ENCODE measurements at regions of chr12 and their contacts with region 1.

Region 1: DNA sequence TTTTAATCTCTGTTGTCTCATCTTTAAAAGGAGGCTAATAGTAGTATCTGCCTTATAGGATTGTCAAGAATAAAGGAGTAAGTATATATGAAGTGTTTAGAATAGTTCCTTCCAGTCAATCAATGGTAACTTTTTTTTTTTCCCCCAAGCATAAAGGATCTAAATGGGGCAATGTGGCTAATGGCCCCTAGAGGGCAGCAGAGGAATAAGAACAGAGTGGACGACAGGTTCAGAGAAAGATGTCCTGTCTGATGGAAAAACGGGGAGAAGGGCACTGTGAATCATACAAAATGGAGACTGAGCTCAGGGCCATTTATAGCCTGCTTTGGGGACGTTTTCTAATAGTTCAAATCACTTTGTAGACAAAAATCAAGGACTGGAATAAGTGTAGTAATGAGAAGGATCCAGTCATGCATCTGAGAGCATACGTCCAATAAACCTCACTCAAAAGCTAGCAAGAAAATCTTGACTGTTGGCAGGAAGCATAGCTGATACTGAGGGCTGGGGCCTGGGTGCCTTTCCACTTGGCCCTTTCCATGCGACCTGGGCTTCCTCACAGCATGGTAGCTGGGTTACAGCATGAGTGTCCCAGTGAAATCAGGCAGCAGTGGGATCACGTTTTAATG is 51.3 kb downstream of the IFNG-AS1 start:
- DNase-seq: peak; percentile 86
- ATAC-seq: peak; percentile 57
- H3K4me3 Mint-ChIP-seq: no peak overlapping the region
- H3K27ac Mint-ChIP-seq: peak overlapping the region; percentile 86
- H3K4me1 Mint-ChIP-seq: peaks cover 56% of the 10 kb centered on the region
- H3K27me3 Mint-ChIP-seq: no peaks in the 10 kb centered on the region
- CTCF ChIP-seq: peak; percentile 93

Region 2: GRCh38 chr12:68012712-68013111 is 27.9 kb before region 1 on chr12:
- CTCF ChIA-PET with region 1: interaction called, 29 read pairs
- POLR2A ChIA-PET with region 1: interaction called, 3 read pairs
- intact Hi-C with region 1: no loop called
- DNase-seq: no peak
- ATAC-seq: no peak
- H3K4me3 Mint-ChIP-seq: no peak overlapping the region
- H3K27ac Mint-ChIP-seq: no peak overlapping the region
- H3K4me1 Mint-ChIP-seq: peaks cover 19% of the 10 kb centered on the region
- H3K27me3 Mint-ChIP-seq: no peaks in the 10 kb centered on the region
- CTCF ChIP-seq: no peak

Region 3: GRCh38 chr12:68113644-68114043 is 73.1 kb after region 1 on chr12:
- CTCF ChIA-PET with region 1: interaction called, 14 read pairs
- POLR2A ChIA-PET with region 1: no interaction called
- intact Hi-C with region 1: no loop called
- DNase-seq: peak; percentile 74
- ATAC-seq: peak; percentile 54
- H3K4me3 Mint-ChIP-seq: no peak overlapping the region
- H3K27ac Mint-ChIP-seq: no peak overlapping the region
- H3K4me1 Mint-ChIP-seq: peaks cover 25% of the 10 kb centered on the region
- H3K27me3 Mint-ChIP-seq: peaks cover 2% of the 10 kb centered on the region
- CTCF ChIP-seq: peak; percentile 62

Region 4: GRCh38 chr12:68158432-68158831 is 117.9 kb after region 1 on chr12:
- CTCF ChIA-PET with region 1: interaction called, 107 read pairs
- POLR2A ChIA-PET with region 1: interaction called, 11 read pairs
- intact Hi-C with region 1: loop called (anchors 5 kb)
- DNase-seq: peak; percentile 57
- ATAC-seq: peak; percentile 43
- H3K4me3 Mint-ChIP-seq: peak overlapping the region; percentile 82
- H3K27ac Mint-ChIP-seq: peak overlapping the region; percentile 83
- H3K4me1 Mint-ChIP-seq: peaks cover 57% of the 10 kb centered on the region
- H3K27me3 Mint-ChIP-seq: no peaks in the 10 kb centered on the region
- CTCF ChIP-seq: peak; percentile 81

Region 5: DNA sequence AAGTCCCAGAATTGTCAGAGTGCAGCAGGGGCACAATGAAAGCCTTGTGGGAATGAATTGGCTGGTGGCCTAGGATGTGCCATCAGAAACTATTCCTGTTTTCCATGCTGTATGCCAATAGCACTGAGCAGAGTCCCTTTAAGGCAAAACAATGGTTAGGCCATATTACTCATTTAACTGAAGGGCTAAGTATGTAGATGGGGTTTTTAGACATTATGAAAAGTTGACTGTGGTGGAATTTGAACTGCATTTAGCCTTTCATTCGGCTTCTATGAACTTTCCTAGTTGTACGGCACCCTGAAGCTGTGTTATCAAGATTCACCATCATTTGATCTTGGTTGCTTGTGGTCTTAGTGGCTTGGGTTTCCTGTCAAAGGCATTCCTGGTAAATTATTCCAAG is 160.3 kb after region 1 on chr12:
- CTCF ChIA-PET with region 1: interaction called, 13 read pairs
- POLR2A ChIA-PET with region 1: no interaction called
- intact Hi-C with region 1: loop called (anchors 10 kb)
- DNase-seq: no peak
- ATAC-seq: peak; percentile 49
- H3K4me3 Mint-ChIP-seq: no peak overlapping the region
- H3K27ac Mint-ChIP-seq: no peak overlapping the region
- H3K4me1 Mint-ChIP-seq: peaks cover 45% of the 10 kb centered on the region
- H3K27me3 Mint-ChIP-seq: no peaks in the 10 kb centered on the region
- CTCF ChIP-seq: no peak

Region 6: DNA sequence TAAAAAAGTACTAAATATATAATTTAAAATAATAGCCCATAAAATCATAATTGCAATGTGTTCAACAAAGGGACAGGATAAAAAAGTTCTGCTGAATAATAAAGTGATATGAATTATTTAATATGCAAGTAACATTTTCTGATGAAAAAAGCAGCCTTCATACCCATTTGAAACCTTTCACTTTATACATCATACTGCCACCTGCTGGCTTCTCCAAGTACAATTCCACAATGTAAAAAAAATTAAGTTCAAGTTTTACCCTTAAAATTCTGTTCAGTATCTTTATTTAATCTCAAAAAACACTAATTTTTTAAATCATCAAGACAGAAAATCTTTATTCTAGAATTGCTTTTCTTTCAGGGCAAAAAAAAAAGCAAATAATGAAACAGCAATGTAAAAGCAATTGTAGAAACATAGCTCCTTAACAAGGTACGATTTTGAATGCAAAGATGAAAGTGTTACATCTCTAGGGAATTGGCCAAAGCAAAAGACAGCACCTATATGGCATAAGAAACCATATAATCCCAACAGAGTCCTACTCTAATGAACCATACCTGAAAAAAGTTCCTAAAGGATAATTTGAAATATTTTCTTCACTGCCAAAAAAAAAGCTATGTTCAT is 276.6 kb after region 1 on chr12:
- CTCF ChIA-PET with region 1: interaction called, 17 read pairs
- POLR2A ChIA-PET with region 1: no interaction called
- intact Hi-C with region 1: loop called (anchors 5 kb)
- DNase-seq: peak; percentile 68
- ATAC-seq: no peak
- H3K4me3 Mint-ChIP-seq: no peak overlapping the region
- H3K27ac Mint-ChIP-seq: no peak overlapping the region
- H3K4me1 Mint-ChIP-seq: no peaks in the 10 kb centered on the region
- H3K27me3 Mint-ChIP-seq: no peaks in the 10 kb centered on the region
- CTCF ChIP-seq: peak; percentile 82

Measured in activated CD8-positive, alpha-beta T cell treated with anti-CD3 and anti-CD28 coated beads for 36 hours (primary cell).